ENCODE measurements at regions of chr21 and their contacts with region 1.

Region 1: GRCh38 chr21:40658316-40658715 is 188.6 kb downstream of the DSCAM start:
- DNase-seq: no peak
- ATAC-seq: no peak
- H3K4me3 ChIP-seq: no peak overlapping the region
- H3K27ac ChIP-seq: no peak overlapping the region
- H3K4me1 ChIP-seq: no peaks in the 10 kb centered on the region
- H3K27me3 ChIP-seq: peaks cover 0 to 4% (median 0%) of the 10 kb centered on the region in 9 donors
- CTCF ChIP-seq: no peak
- POLR2A ChIP-seq: no peak

Region 2: DNA sequence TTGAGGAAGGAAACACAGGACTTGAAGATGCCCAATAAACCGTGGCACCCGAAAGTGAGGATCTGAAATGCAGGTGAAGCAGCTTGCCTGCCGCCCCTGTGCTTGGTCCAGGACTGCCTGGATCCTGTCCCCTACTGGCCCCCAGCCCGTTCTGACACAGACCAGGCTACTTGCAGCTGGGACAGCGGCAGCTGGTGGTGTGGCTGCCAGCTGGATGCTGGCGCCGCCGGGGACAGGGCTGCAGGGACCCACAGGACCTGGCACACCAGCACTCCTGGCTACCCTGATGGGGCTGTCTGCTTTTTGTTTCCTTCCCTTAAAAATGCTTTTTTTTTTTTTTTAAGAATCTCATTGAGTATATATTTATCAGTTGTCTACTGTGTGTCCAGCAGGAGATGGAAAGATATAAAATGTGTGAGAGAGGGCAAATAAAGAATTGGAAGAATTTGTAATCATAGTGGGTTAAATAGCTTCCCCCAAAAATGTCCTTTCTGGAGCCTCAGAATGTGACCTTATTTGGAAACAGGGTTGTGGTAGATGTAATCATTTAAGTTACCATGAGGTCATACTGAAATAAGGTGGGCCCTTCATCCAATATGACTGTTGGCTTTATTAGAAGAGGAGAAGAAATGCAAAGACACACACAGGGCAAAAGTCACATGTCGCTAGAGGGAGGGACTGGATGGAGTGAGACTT is 23.0 kb after region 1 on chr21:
- intact Hi-C with region 1: loop called in 1 of 10 experiments (anchors 2 kb)
- DNase-seq: peak in 4 of 5 donors; percentile 11 to 65 (median 48)
- ATAC-seq: peak in 3 of 4 donors; percentile 54 to 74 (median 63)
- H3K4me3 ChIP-seq: no peak overlapping the region
- H3K27ac ChIP-seq: no peak overlapping the region
- H3K4me1 ChIP-seq: no peaks in the 10 kb centered on the region
- H3K27me3 ChIP-seq: peaks cover 0 to 3% (median 0%) of the 10 kb centered on the region in 9 donors
- CTCF ChIP-seq: no peak
- POLR2A ChIP-seq: no peak

Measured in heart left ventricle (tissue), 16 donors.